ENCODE measurements at regions of chr2 and their contacts with region 1.

Region 1: DNA sequence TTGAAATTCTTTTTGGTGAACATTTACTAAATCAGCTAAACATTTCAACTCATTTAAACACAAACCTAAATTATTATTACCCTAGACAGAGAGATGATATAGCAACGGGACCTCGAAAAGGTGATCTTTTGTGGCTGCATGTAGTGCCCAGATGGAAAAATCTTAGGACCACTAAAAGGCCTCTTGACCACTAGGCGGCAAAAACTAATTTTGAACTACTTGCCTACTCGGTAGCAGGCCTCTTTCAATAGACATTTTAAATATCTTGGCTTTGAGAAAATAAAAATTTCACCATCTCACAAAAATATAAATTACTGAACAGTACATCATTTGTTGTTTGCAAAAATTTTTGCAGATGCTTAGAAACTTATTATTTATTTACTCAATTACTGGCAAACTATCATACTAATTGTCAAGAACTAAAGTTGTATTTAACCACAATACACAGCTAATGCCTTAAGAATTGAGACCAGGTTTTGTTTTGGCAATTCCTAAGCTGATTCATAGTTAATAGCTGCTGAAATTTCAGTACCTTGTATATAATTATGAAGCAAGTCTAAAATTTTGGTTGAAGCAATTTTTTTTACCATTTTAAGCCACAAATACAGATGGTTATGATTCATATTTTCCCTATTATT is 9.4 kb downstream of the COL3A1 start:
- DNase-seq: no peak
- ATAC-seq: no peak
- H3K4me3 ChIP-seq: no peak overlapping the region
- H3K27ac ChIP-seq: no peak overlapping the region
- H3K4me1 ChIP-seq: peaks cover 12% of the 10 kb centered on the region; the same call in 1 of the 2 replicates
- H3K27me3 ChIP-seq: no peaks in the 10 kb centered on the region
- CTCF ChIP-seq: peak; percentile 41; the same call in 1 of the 2 replicates

Region 2: DNA sequence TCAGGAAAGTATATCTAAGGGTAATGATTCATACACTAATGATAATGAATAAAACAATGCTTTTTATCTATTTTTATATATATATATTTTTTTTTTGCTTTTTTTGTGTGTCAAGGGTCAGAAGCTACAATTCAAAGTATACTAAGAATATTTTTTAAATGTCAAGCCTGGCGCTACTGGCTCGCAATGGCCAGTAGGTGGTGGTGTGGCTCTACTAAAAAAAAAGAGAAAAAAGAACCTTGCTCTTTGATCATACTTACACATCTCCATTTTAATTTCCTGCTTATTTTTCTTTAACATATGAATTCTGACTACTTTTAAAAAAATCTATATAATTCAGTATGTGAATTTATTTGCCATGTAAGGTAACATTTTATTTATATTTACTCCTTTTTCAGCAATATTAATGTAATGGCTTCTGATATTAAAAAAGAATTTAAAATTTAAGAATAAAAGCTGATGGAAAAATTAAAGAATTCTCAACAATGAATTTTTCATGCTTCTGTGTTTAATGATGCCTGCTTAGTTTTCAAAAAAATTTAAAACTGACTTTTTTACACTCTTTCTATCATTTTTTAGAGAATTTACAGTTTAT is 458.9 kb before region 1 on chr2:
- CTCF ChIA-PET with region 1: interaction called, 9 read pairs
- POLR2A ChIA-PET with region 1: no interaction called
- in situ Hi-C with region 1: no loop called
- intact Hi-C with region 1: loop called (anchors 2 kb)
- DNase-seq: no peak
- ATAC-seq: no peak
- H3K4me3 ChIP-seq: no peak overlapping the region
- H3K27ac ChIP-seq: no peak overlapping the region
- H3K4me1 ChIP-seq: no peaks in the 10 kb centered on the region; the same call in 1 of the 2 replicates
- H3K27me3 ChIP-seq: no peaks in the 10 kb centered on the region
- CTCF ChIP-seq: peak; percentile 76; the same call in 1 of the 2 replicates

Region 3: DNA sequence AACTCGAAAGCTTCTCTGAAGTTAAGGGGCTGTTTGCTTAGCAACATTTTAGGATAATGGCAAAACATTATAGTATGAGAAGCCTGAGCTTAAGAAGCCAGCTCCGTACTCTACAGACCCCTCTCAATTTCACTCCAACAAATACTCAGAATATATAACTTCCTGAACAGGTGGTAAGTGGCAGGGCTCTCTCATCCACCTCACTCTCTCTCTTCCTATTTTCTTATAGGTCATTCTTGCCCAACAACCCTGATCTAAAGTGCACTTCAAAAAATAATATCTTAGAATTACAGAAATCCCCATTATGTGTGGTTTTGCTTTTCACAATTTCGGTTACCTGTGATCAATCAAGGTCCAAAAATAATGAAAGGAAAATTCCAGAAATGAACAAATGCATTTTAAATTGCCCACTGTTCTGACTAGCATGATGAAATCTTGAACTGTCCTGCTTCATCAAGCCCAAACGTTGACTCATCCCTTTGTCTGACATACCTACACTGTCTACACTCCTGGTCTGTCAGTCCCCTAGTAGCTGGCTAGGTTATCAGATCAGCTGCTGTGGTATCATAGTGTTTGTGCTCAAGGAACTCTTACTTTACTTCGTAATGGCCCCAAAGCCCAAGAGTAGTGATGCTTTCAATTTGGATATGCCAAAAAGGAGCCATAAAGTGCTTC is 318.9 kb after region 1 on chr2:
- CTCF ChIA-PET with region 1: no interaction called
- POLR2A ChIA-PET with region 1: no interaction called
- in situ Hi-C with region 1: no loop called
- intact Hi-C with region 1: loop called (anchors 5 kb)
- DNase-seq: no peak
- ATAC-seq: 0 out of 2 replicates have a peak, but pooled peaks have one; percentile 58
- H3K4me3 ChIP-seq: no peak overlapping the region
- H3K27ac ChIP-seq: no peak overlapping the region
- H3K4me1 ChIP-seq: no peaks in the 10 kb centered on the region
- H3K27me3 ChIP-seq: no peaks in the 10 kb centered on the region
- CTCF ChIP-seq: no peak